GM10248 (cell line): ENCODE measurements at regions of chr17 and their contacts with region 1.

Region 1: GRCh38 chr17:27601069-27601975 is 29.7 kb upstream of the LGALS9 start:
- DNase-seq: peak; percentile 71
- CTCF ChIP-seq: peak; percentile 89

Region 2: DNA sequence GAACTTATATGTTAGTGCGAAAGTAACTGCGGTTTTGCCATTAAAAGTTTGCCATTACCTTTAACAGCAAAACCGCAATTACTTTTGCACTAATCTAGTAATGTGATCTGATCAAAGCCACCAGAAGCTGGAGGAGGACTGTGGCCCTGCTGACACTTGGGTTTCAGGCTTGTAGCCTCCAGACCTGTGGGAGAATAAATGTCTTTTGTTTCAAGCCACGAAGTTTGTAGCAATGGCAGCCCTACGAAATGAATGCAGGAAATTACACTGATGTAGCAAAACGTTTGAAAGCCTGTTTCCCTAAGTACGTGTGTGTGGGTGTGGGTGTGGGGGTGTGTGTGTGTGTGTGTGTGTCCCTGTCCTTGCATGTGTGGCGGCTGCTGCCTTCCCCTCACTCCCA is 240.8 kb before region 1 on chr17:
- CTCF ChIA-PET with region 1: interaction called, 111 read pairs
- POLR2A ChIA-PET with region 1: no interaction called
- DNase-seq: no peak
- CTCF ChIP-seq: no peak

Region 3: DNA sequence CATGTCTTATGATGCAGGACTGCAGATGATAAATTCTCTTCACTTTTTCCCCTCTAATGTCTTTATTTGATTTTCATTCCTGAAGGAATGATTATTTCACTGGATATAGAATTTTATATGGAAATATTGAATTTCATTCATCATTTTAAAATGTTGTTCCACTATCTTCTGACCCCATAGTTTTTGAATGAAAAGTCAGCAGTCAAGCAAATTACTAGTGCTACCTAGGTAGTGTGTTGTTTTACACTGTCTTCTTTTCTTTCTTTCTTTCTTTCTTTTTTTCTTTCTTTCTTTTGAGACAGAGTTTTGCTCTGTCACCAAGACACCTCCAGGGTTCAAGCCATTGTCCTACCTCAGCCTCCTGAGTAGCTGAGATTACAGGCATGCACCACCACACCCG is 230.5 kb before region 1 on chr17:
- CTCF ChIA-PET with region 1: no interaction called
- POLR2A ChIA-PET with region 1: no interaction called
- DNase-seq: no peak
- CTCF ChIP-seq: no peak

Region 4: DNA sequence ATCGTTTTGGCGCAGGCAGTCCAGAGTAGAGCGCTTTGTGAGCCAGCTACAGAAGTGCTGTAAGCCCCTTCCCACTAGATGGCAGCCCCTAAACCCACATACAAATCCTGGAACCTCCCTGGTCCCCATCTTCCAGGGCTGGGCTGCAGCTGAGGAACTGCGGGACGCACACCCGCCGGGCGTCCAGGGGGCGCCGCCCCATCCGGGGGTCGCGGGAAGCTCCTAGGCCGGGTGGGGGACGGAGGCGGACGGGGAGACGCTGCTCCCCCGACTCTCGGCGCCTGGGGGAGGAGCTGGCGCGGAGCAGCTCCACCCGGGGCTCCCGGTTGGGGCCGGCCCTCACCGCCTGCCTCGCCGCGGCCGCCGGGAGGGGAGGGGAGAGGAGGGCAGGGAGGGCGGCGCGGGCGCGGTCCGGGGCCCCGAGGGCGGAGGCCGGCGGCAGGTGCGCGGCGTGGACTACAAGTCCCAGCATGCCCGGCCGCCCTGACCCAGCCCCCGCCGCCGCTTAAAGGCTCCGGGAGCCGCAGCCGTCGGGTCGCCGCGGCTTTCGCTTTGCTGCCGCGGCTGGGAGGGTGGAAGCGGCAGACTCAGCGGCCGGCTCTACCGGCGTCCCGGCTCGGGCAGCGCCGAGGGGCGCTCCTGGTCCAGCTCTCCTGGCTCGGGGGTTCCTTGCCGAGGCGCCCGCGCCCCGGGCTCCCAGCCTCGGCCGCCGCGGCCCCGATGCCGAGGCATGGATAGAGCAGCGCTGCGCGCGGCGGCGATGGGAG is 145.2 kb before region 1 on chr17 and contains the start of gene KSR1:
- CTCF ChIA-PET with region 1: interaction called, 22 read pairs
- POLR2A ChIA-PET with region 1: no interaction called
- DNase-seq: peak; percentile 93
- CTCF ChIP-seq: peak; percentile 39

Region 5: GRCh38 chr17:27586203-27586721 is 15.1 kb before region 1 on chr17:
- CTCF ChIA-PET with region 1: interaction called, 140 read pairs
- POLR2A ChIA-PET with region 1: no interaction called
- DNase-seq: no peak
- CTCF ChIP-seq: no peak

Region 6: DNA sequence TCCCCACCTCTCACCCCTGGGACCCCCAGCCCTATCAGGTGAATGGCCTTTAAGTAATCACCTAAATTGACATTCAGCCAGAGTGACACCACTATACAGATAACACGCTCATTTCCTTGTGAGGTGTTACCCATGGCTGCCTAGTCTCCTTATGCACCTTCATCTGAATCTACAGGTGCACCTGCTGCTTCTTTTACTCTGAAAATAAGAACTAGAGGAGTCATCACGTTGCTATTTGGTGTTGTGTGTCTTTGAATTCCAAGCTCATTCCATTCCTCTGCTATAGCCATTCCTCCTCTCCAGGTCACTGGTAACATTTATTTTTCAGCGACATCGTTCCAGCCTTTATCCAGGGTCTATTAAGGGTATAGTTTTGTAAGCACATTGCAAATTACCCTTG is 39.5 kb after region 1 on chr17:
- CTCF ChIA-PET with region 1: interaction called, 331 read pairs
- POLR2A ChIA-PET with region 1: no interaction called
- DNase-seq: no peak
- CTCF ChIP-seq: no peak